Activated CD4-positive, alpha-beta memory T cell treated with anti-CD3 and anti-CD28 coated beads for 36 hours (primary cell): ENCODE measurements at regions of chr1 and their contacts with region 1.

Region 1: GRCh38 chr1:154747740-154748404 is 122.2 kb downstream of the KCNN3 start:
- DNase-seq: peak; percentile 78
- H3K4me3 Mint-ChIP-seq: peak overlapping the region; percentile 58
- H3K27ac Mint-ChIP-seq: peak overlapping the region; percentile 83
- H3K4me1 Mint-ChIP-seq: peaks cover 68% of the 10 kb centered on the region
- H3K27me3 Mint-ChIP-seq: no peaks in the 10 kb centered on the region

Region 2: GRCh38 chr1:154607609-154608396 is 140.1 kb before region 1 on chr1 and contains the start of gene ADAR:
- CTCF ChIA-PET with region 1: interaction called, 4 read pairs
- POLR2A ChIA-PET with region 1: interaction called, 3 read pairs
- intact Hi-C with region 1: loop called (anchors 5 kb)
- DNase-seq: peak; percentile 96
- H3K4me3 Mint-ChIP-seq: peak within 1 kb of the TSS; percentile 90
- H3K27ac Mint-ChIP-seq: peak within 1 kb of the TSS; percentile 98
- H3K4me1 Mint-ChIP-seq: peaks cover 71% of the 10 kb centered on the region
- H3K27me3 Mint-ChIP-seq: no peaks in the 10 kb centered on the region
- total RNA-seq, gene ADAR: 270 to 289 TPM

Region 3: GRCh38 chr1:154730259-154730658 is 17.6 kb before region 1 on chr1:
- CTCF ChIA-PET with region 1: interaction called, 11 read pairs
- POLR2A ChIA-PET with region 1: interaction called, 4 read pairs
- intact Hi-C with region 1: loop called (anchors 2 kb)
- DNase-seq: no peak
- H3K4me3 Mint-ChIP-seq: no peak overlapping the region
- H3K27ac Mint-ChIP-seq: no peak overlapping the region
- H3K4me1 Mint-ChIP-seq: peaks cover 41% of the 10 kb centered on the region
- H3K27me3 Mint-ChIP-seq: peaks cover 16% of the 10 kb centered on the region

Region 4: DNA sequence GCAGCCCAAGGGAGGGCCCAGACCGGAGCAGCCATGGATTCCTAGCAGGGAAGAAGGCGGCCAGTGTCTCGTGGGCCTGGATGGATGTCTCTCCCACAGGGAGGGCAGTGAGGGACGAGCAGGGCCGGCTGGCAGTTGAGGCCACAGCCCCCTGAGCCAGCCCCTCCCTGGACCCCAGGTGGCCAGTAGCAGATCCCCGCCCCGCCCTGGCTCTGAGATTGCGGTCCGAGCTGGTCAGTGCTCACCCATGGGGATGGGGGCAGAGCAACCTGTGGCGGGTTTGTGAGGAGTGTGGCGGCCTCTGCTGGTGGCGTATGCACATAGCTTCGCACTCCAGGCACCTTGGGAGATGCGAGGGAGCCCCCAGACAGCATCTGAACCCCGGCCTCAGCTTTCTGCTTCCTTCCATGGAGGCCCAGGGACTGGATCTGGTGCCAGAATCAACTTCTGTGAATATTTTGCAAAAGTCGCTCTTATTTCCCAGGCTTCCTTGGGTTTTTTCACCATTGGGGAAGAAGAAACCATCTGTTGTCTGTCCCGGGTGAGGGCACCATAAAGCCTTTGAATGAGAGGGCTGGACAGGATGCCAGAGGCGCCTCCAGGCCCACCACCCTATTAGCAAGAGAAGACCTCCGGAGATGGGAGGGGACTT is 130.6 kb after region 1 on chr1:
- CTCF ChIA-PET with region 1: interaction called, 10 read pairs
- POLR2A ChIA-PET with region 1: no interaction called
- intact Hi-C with region 1: no loop called
- DNase-seq: peak; percentile 84
- H3K4me3 Mint-ChIP-seq: no peak overlapping the region
- H3K27ac Mint-ChIP-seq: no peak overlapping the region
- H3K4me1 Mint-ChIP-seq: peaks cover 14% of the 10 kb centered on the region
- H3K27me3 Mint-ChIP-seq: peaks cover 3% of the 10 kb centered on the region

Region 5: DNA sequence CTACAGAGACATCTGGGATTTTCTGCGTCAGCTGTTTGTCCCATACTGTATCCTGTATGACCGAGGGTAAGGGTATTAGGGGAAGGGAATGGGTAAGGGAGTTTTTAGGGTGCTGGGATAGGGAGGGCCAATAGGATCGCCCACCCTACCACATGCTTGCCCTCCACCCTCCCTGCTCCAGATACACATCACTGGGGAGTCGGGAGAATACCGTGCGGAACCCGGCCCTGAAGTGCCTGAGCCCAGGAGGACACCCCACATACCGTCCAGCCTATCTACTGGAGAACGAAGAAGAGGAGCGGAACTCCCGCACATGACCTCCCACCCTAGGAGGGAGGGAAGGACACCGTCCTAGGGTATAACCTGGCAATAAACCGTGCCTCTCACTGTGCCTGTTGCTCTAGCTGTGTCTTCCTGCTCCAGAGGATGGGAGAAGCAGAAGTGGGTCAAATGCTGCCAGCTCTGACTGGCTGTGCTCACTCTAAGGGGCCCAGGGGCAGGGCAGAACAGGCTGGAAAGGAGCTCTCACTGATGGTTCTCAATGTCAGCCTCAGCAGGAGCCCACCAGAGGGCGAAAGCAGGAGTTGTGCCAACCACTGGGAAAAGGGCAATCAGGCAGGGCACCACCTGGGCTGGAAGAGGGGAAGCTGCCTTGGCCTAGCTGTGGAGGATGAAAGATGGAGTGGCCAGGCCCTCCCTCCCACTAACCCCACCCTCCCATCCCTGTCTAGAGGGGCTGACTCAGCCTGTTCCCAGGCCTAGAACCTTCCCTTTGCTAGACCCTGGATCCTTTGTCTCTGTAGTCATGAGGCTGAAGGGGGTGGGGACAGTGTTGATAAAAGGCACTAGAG is 245.1 kb after region 1 on chr1:
- CTCF ChIA-PET with region 1: no interaction called
- POLR2A ChIA-PET with region 1: no interaction called
- intact Hi-C with region 1: no loop called
- DNase-seq: no peak
- H3K4me3 Mint-ChIP-seq: no peak overlapping the region
- H3K27ac Mint-ChIP-seq: no peak overlapping the region
- H3K4me1 Mint-ChIP-seq: peaks cover 21% of the 10 kb centered on the region
- H3K27me3 Mint-ChIP-seq: no peaks in the 10 kb centered on the region